Stomach (tissue), 19 donors: ENCODE measurements at regions of chr5 and their contacts with region 1.

Region 1: DNA sequence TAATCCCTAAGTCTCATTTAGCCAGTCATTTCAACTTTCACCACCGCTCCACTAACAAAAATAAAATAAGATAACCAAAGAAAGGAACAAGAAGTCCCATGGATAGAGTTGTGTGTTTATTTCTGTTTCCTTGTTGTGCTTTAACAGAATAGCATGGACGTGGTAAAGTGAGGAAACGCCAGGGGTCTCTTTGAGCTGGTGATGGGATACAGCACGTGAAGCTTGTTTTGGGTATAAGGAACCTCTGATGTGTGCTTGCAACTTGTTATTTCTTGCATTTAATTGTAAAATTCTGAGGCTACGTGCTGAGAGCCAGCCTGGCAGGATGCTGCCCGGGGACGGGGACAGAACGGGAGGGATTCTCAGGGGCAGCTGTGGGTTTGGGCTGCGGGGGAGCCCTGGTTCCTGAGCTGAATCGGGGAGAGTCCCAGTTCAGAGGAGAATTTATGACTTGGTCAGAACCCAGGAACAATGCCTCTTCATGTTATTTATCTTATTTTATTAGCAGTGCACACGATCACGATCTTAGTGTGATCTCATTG is 63.4 kb downstream of the ANKRD33B start:
- DNase-seq: no peak
- H3K4me3 ChIP-seq: peak overlapping the region; percentile 20 to 33 (median 25)
- H3K27ac ChIP-seq: peak overlapping the region in 4 of 5 donors; percentile 5 to 81 (median 76)
- H3K4me1 ChIP-seq: peaks cover 9 to 36% (median 20%) of the 10 kb centered on the region in 4 donors
- H3K27me3 ChIP-seq: no peaks in the 10 kb centered on the region
- CTCF ChIP-seq: no peak
- EP300 ChIP-seq: no peak
- POLR2A ChIP-seq: no peak

Region 2: GRCh38 chr5:10445352-10445751 is 181.9 kb before region 1 on chr5:
- intact Hi-C with region 1: loop called (anchors 5 kb)
- DNase-seq: no peak
- H3K4me3 ChIP-seq: no peak overlapping the region
- H3K27ac ChIP-seq: peak overlapping the region in 1 of 5 donors; percentile 34
- H3K4me1 ChIP-seq: peaks cover 0 to 34% (median 23%) of the 10 kb centered on the region in 4 donors
- H3K27me3 ChIP-seq: no peaks in the 10 kb centered on the region
- CTCF ChIP-seq: no peak
- EP300 ChIP-seq: no peak
- POLR2A ChIP-seq: no peak

Region 3: DNA sequence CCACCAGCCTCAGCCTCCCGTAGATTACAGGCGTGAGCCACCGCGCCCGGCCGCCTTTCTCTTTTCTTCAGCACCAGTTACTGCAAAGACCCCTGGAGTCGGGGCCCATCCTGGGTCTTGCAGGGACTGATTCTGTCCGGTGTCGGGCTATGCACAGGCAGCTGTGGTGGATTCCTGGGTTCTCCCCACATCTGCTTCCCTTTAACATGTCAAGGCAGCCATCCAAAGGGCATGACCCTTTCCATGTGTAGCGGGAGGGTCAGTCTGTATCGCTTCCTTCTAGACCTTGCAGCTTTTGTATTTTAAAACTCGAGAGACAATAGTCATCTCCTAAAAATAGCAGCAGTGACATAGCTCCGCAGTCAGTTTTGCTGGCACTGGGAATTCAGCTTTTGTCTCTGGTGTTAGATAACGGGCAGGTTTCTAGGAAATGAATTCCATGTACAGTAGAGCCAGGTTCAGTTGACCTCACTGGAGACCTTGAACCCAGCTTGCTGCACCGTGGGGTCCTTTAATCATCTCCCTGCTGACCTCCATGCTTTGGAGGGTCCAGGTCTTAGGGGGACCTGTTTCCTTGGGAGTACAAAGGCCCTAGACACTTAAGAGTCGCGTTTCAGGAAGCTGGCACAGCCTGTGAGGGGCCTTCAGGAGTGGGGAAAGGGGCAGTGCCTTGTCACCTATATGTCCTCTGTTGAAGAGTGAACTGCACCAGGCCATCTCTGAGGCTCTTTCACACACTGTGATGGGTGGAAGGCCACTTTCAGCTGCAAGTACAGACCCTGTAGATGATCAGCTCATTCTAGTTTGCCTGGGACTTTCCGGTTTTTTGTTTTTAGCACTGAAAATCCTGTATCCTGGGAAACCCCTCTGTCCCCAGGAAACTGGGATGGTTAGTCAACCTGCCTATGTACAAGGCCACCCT is 49.6 kb before region 1 on chr5:
- intact Hi-C with region 1: no loop called
- DNase-seq: peak in 1 of 2 donors; percentile 71
- H3K4me3 ChIP-seq: no peak overlapping the region
- H3K27ac ChIP-seq: peak overlapping the region in 1 of 5 donors; percentile 29
- H3K4me1 ChIP-seq: peaks cover 0 to 22% (median 5%) of the 10 kb centered on the region in 4 donors
- H3K27me3 ChIP-seq: no peaks in the 10 kb centered on the region
- CTCF ChIP-seq: no peak
- EP300 ChIP-seq: no peak
- POLR2A ChIP-seq: no peak

Region 4: GRCh38 chr5:11000515-11001353 is 373.5 kb after region 1 on chr5:
- intact Hi-C with region 1: no loop called
- DNase-seq: no peak
- H3K4me3 ChIP-seq: no peak overlapping the region
- H3K27ac ChIP-seq: no peak overlapping the region
- H3K4me1 ChIP-seq: no peaks in the 10 kb centered on the region
- H3K27me3 ChIP-seq: peaks cover 0 to 3% (median 0%) of the 10 kb centered on the region in 3 donors
- CTCF ChIP-seq: no peak
- EP300 ChIP-seq: no peak
- POLR2A ChIP-seq: no peak